ENCODE measurements at regions of chr6 and their contacts with region 1.

Region 1: DNA sequence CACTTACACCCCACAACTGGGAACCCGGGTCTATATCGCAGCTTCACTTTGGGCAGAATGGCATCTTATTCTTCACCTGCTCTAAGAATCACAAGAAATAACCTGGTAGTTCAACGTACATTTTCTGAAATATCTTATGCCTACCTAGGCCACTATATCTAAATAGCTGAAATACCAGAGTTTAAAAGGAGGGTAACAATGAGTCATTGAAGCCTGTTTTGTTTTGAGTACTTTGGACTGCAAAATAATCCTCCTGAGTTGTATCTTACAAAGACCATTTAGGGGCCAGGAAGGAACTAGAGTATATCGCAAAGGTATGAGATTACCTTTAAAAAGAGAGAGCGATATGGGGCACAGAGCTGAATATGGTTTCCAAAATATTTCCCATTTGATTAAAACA is 96.7 kb upstream of the NUP153 start:
- DNase-seq: no peak
- CTCF ChIP-seq: no peak

Region 2: GRCh38 chr6:17381424-17382147 is 421.8 kb before region 1 on chr6:
- CTCF ChIA-PET with region 1: no interaction called
- POLR2A ChIA-PET with region 1: no interaction called
- DNase-seq: no peak
- CTCF ChIP-seq: no peak

Region 3: GRCh38 chr6:17706580-17707370 is 96.6 kb before region 1 on chr6 and contains the start of gene NUP153:
- CTCF ChIA-PET with region 1: interaction called, 13 read pairs
- POLR2A ChIA-PET with region 1: no interaction called
- DNase-seq: peak; percentile 95
- CTCF ChIP-seq: no peak

Region 4: DNA sequence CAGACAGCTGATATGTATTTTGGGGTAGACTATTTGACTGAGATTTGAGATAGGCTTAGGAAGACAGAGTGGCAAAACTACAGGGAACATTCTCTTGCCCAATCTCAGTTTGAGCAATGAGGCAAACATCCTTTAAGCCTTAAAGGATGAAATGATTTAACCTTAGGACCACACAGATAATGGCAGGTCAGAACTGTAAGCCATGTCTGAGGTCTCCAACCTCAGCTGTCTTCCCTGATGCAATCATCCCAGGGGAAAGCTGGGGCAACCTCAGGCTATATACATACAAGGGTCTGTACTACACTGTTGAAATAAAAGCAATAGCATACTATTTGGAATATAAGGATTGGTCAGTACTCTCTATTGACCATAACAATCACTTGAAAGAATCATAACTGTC is 12.9 kb before region 1 on chr6:
- CTCF ChIA-PET with region 1: interaction called, 23 read pairs
- POLR2A ChIA-PET with region 1: no interaction called
- DNase-seq: no peak
- CTCF ChIP-seq: no peak

Region 5: DNA sequence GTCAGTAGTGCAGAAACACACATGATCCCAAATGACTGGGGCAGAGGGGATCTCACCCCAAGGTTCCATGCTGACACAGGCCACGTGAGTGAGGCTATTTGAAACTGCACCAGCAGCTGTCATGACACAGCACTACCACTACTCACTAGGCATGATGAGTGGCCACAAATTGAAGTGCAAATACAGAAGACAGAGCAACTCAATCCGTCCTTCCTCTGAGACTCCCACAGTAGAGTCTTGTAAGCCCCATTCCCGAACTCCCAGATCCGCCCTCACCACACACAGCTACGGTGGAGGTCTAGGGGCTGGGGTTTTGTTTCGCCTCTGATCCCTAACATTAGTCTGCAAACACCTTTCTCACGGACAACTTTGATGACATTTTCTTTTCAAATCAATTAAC is 16.6 kb after region 1 on chr6:
- CTCF ChIA-PET with region 1: interaction called, 66 read pairs
- POLR2A ChIA-PET with region 1: no interaction called
- DNase-seq: no peak
- CTCF ChIP-seq: no peak

Measured in GM10248 (cell line).